Activated CD4-positive, alpha-beta T cell treated with anti-CD3 and anti-CD28 coated beads, Interleukin-2, amount 10 ng/mL, durations not matched to agents 7 days and 5 days (primary cell): ENCODE measurements at regions of chr2 and their contacts with region 1.

Region 1: GRCh38 chr2:203599509-203599908 is 64.4 kb upstream of the RAPH1 start:
- DNase-seq: no peak
- H3K4me3 Mint-ChIP-seq: no peak overlapping the region
- H3K27ac Mint-ChIP-seq: no peak overlapping the region
- H3K4me1 Mint-ChIP-seq: peaks cover 32% of the 10 kb centered on the region
- H3K27me3 Mint-ChIP-seq: peaks cover 28% of the 10 kb centered on the region

Region 2: DNA sequence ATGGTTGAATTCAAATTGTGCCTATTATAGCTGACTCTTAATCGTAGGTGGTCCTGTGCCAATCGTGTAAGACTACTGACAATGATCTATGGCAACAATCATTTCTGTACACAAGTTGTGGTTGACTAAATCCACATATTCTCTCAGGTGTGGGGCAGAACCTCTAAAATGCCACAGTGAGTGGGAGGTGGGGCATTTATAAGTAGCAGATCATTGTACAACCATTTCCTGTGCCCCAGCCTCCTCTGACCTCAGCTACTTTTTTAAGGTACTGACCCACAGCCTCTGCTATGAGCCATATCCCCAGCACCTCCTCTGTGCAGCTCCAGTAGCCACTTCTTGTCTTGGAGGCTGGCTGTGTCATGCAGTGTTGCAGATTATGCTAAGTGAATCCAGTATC is 15.8 kb before region 1 on chr2:
- CTCF ChIA-PET with region 1: interaction called, 17 read pairs
- POLR2A ChIA-PET with region 1: no interaction called
- DNase-seq: peak; percentile 6
- H3K4me3 Mint-ChIP-seq: no peak overlapping the region
- H3K27ac Mint-ChIP-seq: no peak overlapping the region
- H3K4me1 Mint-ChIP-seq: peaks cover 34% of the 10 kb centered on the region
- H3K27me3 Mint-ChIP-seq: peaks cover 28% of the 10 kb centered on the region

Region 3: GRCh38 chr2:203612266-203612665 is 12.8 kb after region 1 on chr2:
- CTCF ChIA-PET with region 1: interaction called, 10 read pairs
- POLR2A ChIA-PET with region 1: no interaction called
- DNase-seq: no peak
- H3K4me3 Mint-ChIP-seq: no peak overlapping the region
- H3K27ac Mint-ChIP-seq: no peak overlapping the region
- H3K4me1 Mint-ChIP-seq: no peaks in the 10 kb centered on the region
- H3K27me3 Mint-ChIP-seq: no peaks in the 10 kb centered on the region

Region 4: DNA sequence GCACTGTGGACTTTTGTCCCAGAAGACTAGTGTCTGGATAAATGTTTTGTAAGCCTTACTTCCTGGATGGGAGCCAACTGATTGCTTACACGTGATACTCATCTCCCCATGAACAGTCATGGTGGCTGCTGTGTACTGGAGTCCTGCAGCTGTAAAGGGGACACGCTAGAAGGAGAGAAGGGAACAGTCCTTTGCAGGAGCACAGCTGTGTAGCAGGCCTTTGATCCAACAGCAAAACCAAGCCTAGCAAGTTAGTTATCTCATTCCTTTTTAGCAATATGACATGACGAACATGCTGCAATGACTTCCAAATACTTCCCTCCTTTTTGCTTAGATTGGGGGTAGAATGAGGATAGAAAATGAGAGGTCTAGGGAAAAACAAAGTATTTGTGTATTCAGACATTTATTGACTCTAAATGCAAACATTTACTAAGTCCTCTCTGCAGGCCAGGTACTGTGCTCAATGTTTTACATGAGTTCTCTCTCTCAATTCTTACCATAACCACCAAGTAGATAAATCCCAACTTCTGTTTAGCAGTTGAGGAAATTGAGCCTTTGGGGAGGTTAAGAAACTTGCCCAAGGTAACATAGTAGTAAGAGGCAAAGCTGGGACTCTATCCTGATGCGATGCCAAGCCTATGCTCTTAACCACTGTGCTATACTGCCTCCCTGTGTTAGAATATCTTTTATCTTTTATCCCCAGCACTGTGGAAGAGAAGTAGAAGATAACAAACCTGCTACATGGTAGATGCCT is 51.5 kb after region 1 on chr2:
- CTCF ChIA-PET with region 1: no interaction called
- POLR2A ChIA-PET with region 1: no interaction called
- DNase-seq: no peak
- H3K4me3 Mint-ChIP-seq: no peak overlapping the region
- H3K27ac Mint-ChIP-seq: no peak overlapping the region
- H3K4me1 Mint-ChIP-seq: peaks cover 25% of the 10 kb centered on the region
- H3K27me3 Mint-ChIP-seq: peaks cover 2% of the 10 kb centered on the region